ENCODE measurements at regions of chr15 and their contacts with region 1.

Region 1: GRCh38 chr15:40054605-40055545 is 15.9 kb upstream of the SRP14 start:
- DNase-seq: peak; percentile 72
- H3K4me3 ChIP-seq: no peak overlapping the region
- H3K27ac ChIP-seq: peak overlapping the region; percentile 74 to 81 (median 80)
- H3K4me1 ChIP-seq: peaks cover 15 to 50% (median 47%) of the 10 kb centered on the region in 4 donors
- H3K27me3 ChIP-seq: no peaks in the 10 kb centered on the region
- CTCF ChIP-seq: no peak
- EP300 ChIP-seq: no peak
- POLR2A ChIP-seq: no peak

Region 2: DNA sequence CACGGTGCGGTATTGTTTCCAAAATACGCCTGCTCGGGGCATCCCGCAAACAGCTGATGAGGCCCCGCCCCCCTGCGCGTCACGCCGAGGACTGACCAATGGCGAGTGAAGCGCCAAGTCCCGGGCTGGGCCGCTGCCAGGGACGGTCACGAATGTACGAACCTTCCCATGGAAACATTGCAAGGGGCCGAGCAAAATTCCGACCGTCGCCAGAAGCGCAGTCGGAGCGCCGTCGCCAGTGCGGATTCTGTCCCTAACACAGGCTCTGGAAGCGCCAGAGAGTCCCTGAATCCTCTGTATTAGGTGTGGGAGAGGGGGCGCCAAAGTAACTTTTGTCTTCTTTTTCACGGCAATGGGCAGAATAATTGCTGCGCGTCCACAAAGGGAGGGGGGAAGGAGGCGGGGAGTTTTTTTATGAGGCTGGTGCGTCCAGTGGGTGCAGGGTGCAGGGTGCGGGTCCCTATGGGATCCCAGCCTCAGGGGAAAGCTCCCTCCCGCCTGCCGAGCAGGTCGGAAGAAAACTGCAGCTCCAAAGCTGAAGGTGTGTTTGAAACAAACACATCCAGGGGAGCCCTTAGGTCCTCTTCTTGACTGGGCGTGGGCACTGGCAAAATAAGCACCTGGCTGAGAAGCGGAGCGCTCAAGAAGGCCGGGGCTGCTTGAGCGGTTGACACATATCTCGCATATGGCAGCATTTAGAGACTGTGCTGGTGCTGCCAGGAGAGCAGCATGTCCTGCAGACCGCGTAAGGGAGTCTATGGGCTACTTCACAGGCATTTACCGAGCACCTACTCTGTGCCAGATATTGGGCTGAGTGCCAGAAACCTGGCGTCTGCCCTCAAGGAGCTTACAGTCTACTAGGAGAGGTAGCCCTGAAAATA is 54.2 kb after region 1 on chr15 and contains the start of gene BMF:
- in situ Hi-C with region 1: loop called in 1 of 4 experiments (anchors 10 kb)
- intact Hi-C with region 1: no loop called
- DNase-seq: peak; percentile 100
- H3K4me3 ChIP-seq: peak within 1 kb of the TSS; percentile 37 to 84 (median 81)
- H3K27ac ChIP-seq: peak within 1 kb of the TSS; percentile 90 to 94 (median 91)
- H3K4me1 ChIP-seq: peaks cover 33 to 51% (median 44%) of the 10 kb centered on the region in 4 donors
- H3K27me3 ChIP-seq: no peaks in the 10 kb centered on the region
- CTCF ChIP-seq: peak in 4 of 5 experiments; percentile 10 to 46 (median 23)
- EP300 ChIP-seq: no peak
- POLR2A ChIP-seq: peak; percentile 58
- total RNA-seq, gene BMF: 13.3 to 35.4 (median 25.1) TPM

Region 3: DNA sequence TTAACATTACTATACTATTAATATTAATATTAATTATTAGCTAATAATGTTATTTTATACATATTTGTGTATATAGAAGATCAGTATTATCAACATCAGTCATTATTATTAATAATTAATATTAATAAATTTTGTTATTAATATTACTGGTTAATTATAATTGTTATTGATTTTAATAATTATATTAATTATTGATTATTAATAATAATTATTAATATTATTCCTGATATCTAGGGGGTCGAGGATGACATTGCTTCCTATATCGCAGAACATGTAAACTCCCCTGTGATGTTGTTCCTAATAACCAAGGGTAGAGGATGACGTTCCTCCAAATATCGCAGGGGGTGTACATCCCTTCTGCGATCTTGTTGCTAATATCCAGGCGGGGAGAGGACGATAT is 71.1 kb after region 1 on chr15:
- in situ Hi-C with region 1: no loop called
- intact Hi-C with region 1: loop called (anchors 2 kb)
- DNase-seq: no peak
- H3K4me3 ChIP-seq: no peak overlapping the region
- H3K27ac ChIP-seq: no peak overlapping the region
- H3K4me1 ChIP-seq: no peaks in the 10 kb centered on the region
- H3K27me3 ChIP-seq: no peaks in the 10 kb centered on the region
- CTCF ChIP-seq: no peak
- EP300 ChIP-seq: no peak
- POLR2A ChIP-seq: no peak

Region 4: GRCh38 chr15:40398413-40398873 is 343.6 kb after region 1 on chr15:
- in situ Hi-C with region 1: no loop called
- intact Hi-C with region 1: no loop called
- DNase-seq: peak; percentile 41
- H3K4me3 ChIP-seq: no peak overlapping the region
- H3K27ac ChIP-seq: no peak overlapping the region
- H3K4me1 ChIP-seq: peaks cover 0 to 4% (median 0%) of the 10 kb centered on the region in 4 donors
- H3K27me3 ChIP-seq: no peaks in the 10 kb centered on the region
- CTCF ChIP-seq: no peak
- EP300 ChIP-seq: no peak
- POLR2A ChIP-seq: no peak

Measured in transverse colon (tissue), 4 donors.